Cardiac septum (tissue), 1 donor: ENCODE measurements at regions of chr1 and their contacts with region 1.

Region 1: DNA sequence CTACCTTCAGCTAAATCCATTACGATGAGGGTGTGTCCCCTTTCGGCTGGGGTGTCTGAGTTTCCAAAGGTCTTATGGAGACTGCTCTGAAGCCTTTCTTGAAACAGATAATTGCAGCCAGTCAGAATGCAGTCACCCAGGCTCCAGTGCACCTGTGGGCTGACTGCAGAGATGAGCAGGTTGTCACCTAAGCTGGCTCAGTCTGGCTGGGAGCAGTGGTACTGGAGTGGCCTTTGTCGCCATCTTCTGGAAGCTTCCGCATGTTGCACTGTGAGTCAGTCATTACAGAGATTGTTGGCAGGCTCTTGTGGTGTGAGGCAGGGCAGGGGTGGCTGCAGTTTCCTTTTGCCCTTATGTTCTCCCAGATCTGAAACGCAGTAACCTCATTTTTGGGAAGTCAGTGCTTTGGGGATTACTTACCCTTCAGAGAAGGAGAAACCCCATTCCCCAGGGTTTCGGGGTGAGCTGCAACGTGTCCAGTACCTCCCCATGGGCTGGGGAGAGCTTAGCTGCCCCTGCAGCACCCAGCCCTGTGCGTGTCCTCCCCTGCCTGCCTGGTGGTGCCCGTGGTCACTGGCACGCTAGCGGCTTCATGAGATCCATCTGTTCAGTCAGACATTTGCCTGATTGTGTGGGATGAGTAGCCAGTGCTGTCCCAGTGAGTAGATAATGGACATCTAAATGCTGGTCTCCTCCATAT is 48.0 kb downstream of the SMYD2 start:
- DNase-seq: peak; percentile 89

Region 2: DNA sequence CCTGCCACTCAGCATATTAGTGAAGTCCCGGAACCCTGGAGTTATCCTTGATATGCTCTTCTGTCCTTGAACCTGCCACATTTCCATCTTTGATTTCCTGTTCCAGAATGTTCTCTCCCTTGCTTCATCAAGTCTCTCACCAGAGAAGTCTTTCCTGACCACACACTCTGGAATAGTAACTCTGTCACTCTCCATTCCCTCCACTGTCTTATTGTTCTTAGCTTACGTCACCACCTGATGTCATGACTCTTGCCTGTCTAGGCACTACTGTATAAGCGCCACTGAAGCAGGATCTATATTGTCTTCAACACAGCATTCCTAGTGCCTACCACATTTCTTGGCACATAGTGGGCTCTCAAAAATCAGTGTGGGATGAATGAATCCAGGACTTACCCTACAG is 113.3 kb before region 1 on chr1:
- intact Hi-C with region 1: loop called (anchors 1 kb)
- DNase-seq: no peak

Region 3: DNA sequence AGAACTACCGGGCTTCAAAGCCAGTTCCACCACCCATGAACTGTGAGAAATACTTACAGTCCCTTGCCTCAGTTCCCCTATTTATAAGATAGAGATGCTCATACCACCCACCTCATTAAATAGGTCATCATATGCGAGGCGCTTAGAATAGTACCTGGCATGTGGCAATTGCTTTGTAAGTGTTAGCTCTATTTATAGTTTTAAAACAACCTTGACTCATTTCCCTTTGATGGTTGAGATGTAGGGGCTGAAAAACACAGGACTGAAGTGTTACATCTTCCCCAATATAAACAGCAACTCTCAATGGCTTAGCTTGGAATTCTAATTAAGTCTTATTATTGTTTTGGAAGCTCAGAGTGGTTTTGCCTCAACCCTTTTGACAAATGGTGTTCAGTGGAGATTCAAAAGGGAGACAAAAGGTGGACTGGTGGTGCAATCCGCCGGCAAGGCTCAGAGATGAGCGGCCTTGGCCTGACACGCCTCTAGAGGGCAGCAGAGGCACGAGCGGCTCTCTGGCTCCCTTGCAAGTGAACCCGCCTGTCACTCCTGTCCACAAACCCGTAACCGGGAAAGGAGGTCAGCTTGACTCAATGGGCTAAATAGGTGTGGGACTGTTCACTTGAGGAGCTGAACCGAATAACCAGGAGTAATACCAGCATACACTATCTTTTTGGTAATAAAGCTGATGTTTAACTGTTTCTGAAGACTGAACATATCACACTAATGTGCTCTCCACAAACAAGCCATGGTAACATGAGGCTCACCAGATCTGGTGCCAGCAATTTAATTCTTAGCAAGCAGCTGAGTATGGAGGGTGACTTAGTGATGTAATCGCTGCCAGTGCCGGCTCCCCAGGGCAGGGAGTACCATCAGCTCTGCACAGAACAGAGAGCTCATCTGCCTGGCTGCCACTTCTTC is 67.5 kb before region 1 on chr1:
- intact Hi-C with region 1: loop called (anchors 1 kb)
- DNase-seq: peak; percentile 93

Region 4: DNA sequence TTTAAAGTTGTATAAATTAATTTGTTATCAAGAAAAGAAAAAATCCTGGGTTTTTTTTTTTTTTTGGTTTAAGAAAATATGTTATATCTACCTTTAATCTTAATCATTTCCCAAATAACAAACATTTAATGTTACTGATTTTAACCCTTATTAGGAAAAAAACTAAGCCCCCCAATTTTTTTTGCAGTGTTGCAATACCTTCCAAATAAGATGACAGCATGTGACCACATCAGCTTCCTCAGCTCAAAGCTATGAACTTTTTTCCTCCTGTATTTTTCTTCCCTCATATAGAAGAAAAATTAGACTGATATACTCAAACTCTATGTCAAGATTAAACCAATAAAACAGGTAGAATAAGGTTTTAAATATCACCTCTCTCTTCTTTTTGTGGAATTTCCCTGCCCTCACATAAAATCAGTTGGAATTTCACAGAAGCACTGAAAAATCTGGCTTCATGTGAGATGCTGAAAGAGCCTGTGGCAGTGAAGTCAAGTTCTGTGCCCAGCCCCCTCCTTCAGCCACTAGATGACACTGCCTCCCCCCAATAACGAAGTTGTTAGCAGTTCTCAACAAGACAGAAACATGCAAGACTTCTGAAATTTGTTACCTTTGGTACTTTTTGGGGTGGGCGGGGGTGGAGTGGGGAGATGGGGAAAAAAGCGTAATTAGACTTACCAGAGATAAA is 57.6 kb before region 1 on chr1:
- intact Hi-C with region 1: loop called (anchors 2 kb)
- DNase-seq: no peak

Region 5: DNA sequence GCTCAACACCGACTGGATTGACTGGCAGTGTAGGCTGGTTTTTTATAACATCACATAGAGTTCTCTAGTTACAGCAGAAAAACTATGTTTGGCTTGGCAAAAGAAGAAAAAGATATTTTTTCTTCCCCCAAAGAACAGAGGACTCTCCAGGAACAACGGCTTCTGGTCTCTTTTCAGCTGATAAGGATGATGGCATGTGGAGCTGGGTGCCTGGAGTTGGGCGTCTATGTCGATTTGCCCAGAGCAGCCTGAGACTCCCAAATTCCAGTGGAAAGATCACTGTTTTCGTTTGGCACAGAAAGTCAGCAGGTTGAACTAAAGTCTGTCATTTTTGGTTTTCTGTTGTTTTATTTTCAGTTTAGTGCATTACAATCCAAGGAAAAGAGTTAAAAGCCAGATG is 43.2 kb after region 1 on chr1:
- intact Hi-C with region 1: loop called (anchors 5 kb)
- DNase-seq: no peak

Region 6: DNA sequence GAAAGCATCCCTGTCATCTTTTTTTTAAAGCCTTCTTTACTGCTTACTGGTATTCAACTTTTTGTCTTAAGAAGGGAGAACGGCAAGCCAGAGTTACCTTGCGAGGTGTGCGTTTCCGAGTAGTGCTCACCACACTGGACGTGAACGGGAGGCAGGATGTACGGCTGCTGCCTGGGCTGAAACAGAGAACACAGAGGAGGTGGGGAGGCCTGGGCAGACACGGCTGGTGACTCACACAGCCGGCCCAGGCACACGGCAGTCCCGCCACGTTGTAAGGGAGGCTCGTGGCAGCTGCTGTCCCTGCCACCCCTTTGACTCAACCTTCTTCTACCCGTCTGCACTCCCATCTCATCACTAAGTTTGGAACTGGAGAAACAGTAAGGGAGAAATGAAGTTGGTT is 57.8 kb after region 1 on chr1:
- intact Hi-C with region 1: no loop called
- DNase-seq: no peak

Region 7: DNA sequence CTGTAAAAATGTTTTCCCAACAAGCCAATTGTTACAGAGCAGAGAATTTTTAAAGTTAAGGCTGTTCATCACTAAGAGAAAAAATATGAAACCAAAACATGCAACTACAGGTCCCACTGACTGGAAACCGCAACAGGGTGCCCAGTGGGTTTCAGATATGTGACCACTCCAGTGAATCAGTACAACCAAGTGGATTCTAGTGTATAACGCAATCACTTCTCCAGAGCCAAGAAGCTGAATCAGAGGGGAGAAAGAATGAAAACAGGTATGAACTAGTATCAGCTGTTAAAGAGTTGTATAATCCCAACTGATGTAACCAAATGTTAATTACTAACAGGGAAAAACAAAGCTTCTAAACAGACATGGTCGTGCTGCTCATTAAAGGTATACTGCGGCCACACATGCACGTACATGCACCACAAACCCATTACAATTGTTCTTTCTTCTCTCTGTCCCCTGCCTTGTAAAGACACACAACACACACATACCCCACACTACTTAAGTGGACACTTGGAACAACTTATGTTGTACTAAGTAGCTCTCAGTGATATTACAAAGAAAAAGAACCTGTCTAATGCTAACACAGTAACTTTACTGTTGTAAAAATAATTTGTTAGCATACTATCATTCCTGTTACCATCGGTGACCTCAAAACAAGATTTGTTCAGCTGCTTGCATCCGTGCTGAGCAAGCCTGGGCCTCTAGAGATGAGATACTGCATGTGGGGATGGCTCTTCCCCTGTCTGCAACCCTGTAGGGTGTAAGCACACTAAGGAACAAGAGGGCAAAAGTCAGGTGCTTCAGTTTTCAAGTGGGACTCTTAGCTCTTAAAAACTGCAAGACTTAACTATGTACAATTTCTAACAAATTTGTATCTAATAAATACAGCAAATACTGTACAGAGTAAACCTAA is 148.3 kb after region 1 on chr1:
- intact Hi-C with region 1: no loop called
- DNase-seq: no peak

Region 8: GRCh38 chr1:214551436-214552173 is 222.7 kb after region 1 on chr1 and contains the start of gene PTPN14:
- intact Hi-C with region 1: loop called (anchors 5 kb)
- DNase-seq: peak; percentile 91
- total RNA-seq, gene PTPN14: 67.7 TPM

Region 9: DNA sequence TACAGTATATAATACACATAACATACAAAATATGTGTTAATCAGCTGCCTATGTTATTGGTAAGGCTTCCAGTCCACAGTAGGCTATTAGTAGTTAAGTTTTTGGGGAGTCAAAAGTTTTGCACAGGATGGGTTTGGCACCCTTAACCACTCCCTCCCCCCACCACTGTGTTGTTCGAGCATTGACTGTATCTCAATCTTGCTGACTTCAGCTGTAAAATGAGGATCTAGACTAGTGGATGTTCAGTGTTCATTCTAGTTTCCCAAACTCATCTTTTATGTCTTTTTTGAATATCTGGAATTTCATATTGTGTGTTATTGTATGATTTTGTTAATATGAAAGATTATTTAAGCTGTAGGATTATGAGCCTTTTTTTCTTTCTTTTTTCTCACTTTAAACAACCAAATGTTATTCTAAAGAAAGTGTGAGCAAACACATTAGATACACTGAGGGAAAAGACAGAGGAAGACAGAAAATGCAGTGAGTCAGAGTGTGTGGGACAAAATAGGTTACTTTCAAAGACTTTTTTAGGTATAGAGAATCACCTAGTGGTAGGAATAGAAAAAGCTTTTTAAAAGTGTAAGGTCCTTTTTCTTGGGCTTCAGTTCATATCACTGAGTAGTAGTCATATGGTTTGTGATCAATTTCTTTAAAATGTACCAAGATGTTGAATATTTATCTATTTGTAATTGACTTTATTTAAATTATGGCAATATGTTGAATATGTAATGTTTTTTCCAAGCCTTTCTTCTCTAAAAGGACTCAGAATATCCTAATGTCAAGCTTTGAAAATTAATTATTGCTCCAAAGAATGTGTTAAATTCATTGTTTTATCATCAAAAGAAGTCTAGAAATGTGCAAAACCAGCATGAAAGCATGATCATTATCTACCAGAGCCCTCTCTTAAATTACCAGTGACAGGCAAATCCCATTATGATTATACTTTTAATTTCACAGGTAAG is 256.2 kb after region 1 on chr1:
- intact Hi-C with region 1: loop called (anchors 1 kb)
- DNase-seq: no peak